H1 (cell line): ENCODE measurements at regions of chr19 and their contacts with region 1.

Region 1: GRCh38 chr19:2475702-2476450 is at the start of gene GADD45B:
- DNase-seq: peak; percentile 90 to 97
- H3K4me3 ChIP-seq: peak within 1 kb of the TSS; percentile 56 to 81 (median 76)
- H3K27ac ChIP-seq: no peak within 1 kb of the TSS
- H3K4me1 ChIP-seq: peaks cover 0 to 14% (median 13%) of the 10 kb centered on the region in 4 experiments; a peak in 6 of 7 replicates
- H3K27me3 ChIP-seq: peaks cover 10 to 40% (median 34%) of the 10 kb centered on the region in 4 experiments
- CTCF ChIP-seq: no peak
- EP300 ChIP-seq: no peak
- POLR2A ChIP-seq: peak; percentile 100
- RAD21 ChIP-seq: no peak
- total RNA-seq, gene GADD45B: 11.0 and 11.4 TPM in 2 replicates

Region 2: DNA sequence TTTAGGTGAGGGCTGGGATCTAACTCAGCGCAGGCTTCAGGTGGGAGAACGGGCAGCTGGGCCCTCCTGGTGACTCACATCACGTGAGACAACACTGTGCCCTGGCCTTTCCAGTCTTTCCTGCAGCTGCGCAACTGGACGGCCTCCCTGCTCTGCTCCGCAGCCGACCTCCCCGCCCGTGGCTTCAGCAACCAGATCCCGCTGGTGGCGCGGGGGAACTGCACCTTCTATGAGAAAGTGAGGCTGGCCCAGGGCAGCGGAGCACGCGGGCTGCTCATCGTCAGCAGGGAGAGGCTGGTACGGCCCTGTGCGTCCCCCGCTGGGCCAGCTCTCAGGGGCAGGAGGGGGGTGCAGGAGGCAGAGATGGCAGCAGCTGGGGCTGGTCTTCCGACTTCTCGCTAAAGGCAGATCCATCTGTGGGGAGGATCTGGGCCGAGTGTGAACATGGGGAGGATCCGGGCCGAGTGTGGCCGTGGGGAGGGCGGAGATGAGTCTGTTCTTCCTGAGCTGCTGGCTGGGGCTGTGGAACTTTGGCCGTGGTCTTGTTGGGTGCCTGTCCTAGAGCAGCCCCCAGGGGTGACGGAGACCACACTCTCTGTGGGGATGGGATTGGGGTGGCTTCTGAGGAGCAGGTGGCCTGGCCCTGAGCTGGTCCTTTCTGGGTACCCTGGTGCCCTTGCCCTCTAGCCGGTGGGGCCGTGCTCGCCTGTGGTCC is 138.4 kb before region 1 on chr19:
- CTCF ChIA-PET with region 1: no interaction called
- POLR2A ChIA-PET with region 1: no interaction called
- DNase-seq: peak in 1 of 2 experiments; percentile 77
- H3K4me3 ChIP-seq: no peak overlapping the region
- H3K27ac ChIP-seq: no peak overlapping the region
- H3K4me1 ChIP-seq: peaks cover 0 to 8% (median 2%) of the 10 kb centered on the region in 4 experiments; a peak in 4 of 7 replicates
- H3K27me3 ChIP-seq: no peaks in the 10 kb centered on the region
- CTCF ChIP-seq: peak in 2 of 3 experiments; percentile 43 to 46; a peak in 3 of 4 replicates
- EP300 ChIP-seq: no peak
- POLR2A ChIP-seq: no peak
- RAD21 ChIP-seq: peak; percentile 8 to 23; a peak in 2 of 4 replicates

Region 3: DNA sequence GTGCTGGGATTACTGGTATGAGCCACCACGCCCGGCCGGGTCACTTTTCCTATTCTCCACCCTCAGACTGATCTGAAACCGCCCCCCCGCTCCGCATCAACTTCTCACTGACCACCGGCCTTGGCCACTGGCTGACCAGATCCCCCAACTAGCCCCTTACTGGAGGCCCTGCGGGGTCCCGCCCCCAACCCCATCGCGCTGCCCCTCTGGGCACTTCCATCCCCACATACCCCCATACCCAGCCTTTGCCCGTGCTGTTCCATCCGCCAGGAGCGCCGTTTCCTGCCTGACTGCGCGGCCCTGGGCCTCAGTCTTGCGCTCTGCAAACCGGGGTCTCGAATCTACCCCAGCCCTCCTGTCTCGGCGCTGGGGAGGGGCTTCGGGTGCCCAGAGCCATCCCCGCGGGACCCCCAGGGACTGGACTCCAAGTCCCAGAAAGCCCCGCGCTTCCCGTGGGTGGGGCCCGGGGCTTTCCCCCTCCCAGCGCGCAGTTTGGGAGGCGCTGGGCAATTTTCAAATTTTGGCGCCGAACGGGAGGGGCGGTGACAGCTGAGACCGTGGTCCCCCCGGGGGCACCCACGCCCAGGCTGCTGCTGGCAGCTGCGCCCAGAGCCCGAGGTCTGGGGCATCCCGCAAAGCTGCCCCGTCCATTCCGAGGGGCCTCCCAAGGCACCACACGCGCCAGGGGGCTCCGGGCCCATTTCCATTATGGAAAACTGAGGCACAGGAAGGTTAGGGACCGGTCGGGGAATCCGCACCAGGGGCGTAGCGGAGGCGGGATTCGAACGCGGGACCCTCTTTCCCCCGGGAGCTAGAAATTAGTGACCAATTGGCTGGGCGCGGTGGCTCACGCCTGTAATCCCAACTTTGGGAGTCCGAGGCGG is 13.9 kb before region 1 on chr19:
- CTCF ChIA-PET with region 1: interaction called, 8 read pairs
- POLR2A ChIA-PET with region 1: interaction called, 98 read pairs
- DNase-seq: peak in 1 of 2 experiments; percentile 82
- H3K4me3 ChIP-seq: peak overlapping the region; percentile 37 to 65 (median 60)
- H3K27ac ChIP-seq: no peak overlapping the region
- H3K4me1 ChIP-seq: peaks cover 0 to 4% (median 0%) of the 10 kb centered on the region in 4 experiments; a peak in 2 of 7 replicates
- H3K27me3 ChIP-seq: no peaks in the 10 kb centered on the region
- CTCF ChIP-seq: peak in 1 of 3 experiments; percentile 10; a peak in 1 of 4 replicates
- EP300 ChIP-seq: no peak
- POLR2A ChIP-seq: no peak
- RAD21 ChIP-seq: no peak

Region 4: GRCh38 chr19:2517868-2518625 is 42.2 kb after region 1 on chr19:
- CTCF ChIA-PET with region 1: interaction called, 4 read pairs
- POLR2A ChIA-PET with region 1: interaction called, 37 read pairs
- DNase-seq: no peak
- H3K4me3 ChIP-seq: no peak overlapping the region
- H3K27ac ChIP-seq: no peak overlapping the region
- H3K4me1 ChIP-seq: peaks cover 0 to 4% (median 2%) of the 10 kb centered on the region in 4 experiments; a peak in 4 of 7 replicates
- H3K27me3 ChIP-seq: no peaks in the 10 kb centered on the region
- CTCF ChIP-seq: no peak
- EP300 ChIP-seq: no peak
- POLR2A ChIP-seq: no peak
- RAD21 ChIP-seq: no peak

Region 5: GRCh38 chr19:2552859-2553258 is 77.0 kb after region 1 on chr19:
- CTCF ChIA-PET with region 1: interaction called, 5 read pairs
- POLR2A ChIA-PET with region 1: interaction called, 31 read pairs
- DNase-seq: no peak
- H3K4me3 ChIP-seq: no peak overlapping the region
- H3K27ac ChIP-seq: no peak overlapping the region
- H3K4me1 ChIP-seq: peaks cover 0 to 10% (median 0%) of the 10 kb centered on the region in 4 experiments; a peak in 1 of 7 replicates
- H3K27me3 ChIP-seq: no peaks in the 10 kb centered on the region
- CTCF ChIP-seq: no peak
- EP300 ChIP-seq: no peak
- POLR2A ChIP-seq: no peak
- RAD21 ChIP-seq: no peak

Region 6: DNA sequence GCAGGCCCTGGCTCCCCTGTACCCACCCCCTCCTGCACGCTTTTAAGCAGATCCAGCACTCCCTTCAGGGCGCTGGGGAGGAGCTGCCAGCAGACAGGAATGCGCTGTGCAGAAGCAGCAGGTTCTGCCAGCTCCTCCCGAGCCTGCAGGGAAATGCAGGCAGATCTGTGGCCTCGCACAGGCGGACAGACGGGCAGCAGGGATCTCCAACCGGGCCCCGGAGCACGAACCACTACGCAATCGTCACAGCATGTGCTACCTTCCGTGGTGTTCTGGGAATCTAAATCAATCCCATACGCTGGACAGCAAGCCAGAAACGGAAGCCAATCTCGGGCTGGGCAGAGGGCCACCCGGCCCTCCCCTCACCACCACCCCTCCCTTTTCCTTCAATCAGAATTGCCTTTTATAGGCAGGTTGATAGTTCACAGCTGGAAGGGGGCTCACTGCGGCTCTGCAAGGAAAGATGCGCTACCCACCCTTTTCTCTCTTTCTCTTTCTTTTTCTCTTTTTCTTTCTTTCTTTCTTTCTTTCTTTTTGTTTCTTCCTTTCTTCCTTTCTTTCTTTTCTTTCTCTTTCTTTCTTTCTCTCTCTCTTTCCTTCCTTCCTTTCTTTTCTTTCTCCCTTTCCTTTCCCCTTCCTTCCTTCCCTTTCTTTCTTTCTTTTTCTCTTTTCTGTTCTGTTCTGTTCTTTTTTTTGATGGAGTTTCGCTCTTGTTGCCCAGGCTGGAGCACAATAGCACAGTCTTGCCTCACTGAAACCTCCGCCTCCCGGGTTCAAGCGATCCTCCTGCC is 126.7 kb after region 1 on chr19:
- CTCF ChIA-PET with region 1: interaction called, 96 read pairs
- POLR2A ChIA-PET with region 1: interaction called, 135 read pairs
- DNase-seq: peak in 1 of 2 experiments; percentile 80
- H3K4me3 ChIP-seq: peak overlapping the region in 3 of 4 experiments; percentile 10 to 45 (median 27); a peak in 4 of 8 replicates
- H3K27ac ChIP-seq: no peak overlapping the region
- H3K4me1 ChIP-seq: peaks cover 0 to 8% (median 2%) of the 10 kb centered on the region in 4 experiments; a peak in 4 of 7 replicates
- H3K27me3 ChIP-seq: peaks cover 0 to 4% (median 0%) of the 10 kb centered on the region in 4 experiments; a peak in 2 of 7 replicates
- CTCF ChIP-seq: no peak
- EP300 ChIP-seq: no peak
- POLR2A ChIP-seq: peak in 1 of 2 experiments; percentile 52; a peak in 1 of 3 replicates
- RAD21 ChIP-seq: no peak; a peak in 1 of 4 replicates

Region 7: DNA sequence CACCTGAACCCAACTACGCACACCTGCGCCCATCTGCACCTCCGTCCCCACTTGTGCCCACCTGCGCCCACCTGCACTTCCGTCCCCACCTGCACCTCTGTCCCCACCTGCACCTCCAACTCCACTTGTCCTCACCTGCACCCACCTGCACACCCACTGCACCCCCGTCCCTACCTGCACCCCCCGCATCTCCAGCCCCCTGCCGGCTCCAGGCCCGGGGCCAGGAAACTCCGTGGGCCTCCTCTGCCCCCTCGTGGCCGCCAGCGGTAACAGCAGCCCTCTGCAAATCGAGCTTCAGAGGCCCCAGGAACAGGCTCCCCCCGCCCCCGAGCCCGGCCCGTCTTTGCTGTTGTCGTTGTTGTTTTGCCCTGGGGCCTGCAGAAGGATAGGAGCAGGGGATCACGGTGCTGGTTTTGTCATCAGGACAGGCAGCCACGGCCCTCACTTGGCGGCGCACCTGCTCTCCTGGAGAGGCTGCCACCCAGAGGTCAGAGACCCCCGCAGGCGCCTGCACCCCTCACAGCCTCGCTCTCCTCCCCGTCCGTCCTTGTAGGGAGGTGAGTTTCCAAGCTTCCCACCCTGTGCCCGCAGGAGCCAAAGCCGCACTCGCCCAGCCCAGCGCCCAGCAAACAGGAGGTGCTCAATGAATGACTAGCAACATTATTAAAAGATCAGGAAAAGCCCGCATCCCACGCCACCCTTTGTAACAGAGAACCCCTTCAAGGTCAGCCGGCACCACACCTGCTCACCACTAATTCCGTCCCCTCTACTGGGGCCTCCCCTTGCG is 161.2 kb after region 1 on chr19:
- CTCF ChIA-PET with region 1: interaction called, 34 read pairs
- POLR2A ChIA-PET with region 1: interaction called, 20 read pairs
- DNase-seq: peak in 1 of 2 experiments; percentile 89
- H3K4me3 ChIP-seq: peak overlapping the region in 3 of 4 experiments; percentile 36 to 54 (median 38); a peak in 6 of 8 replicates
- H3K27ac ChIP-seq: no peak overlapping the region
- H3K4me1 ChIP-seq: peaks cover 0 to 4% (median 2%) of the 10 kb centered on the region in 4 experiments; a peak in 3 of 7 replicates
- H3K27me3 ChIP-seq: no peaks in the 10 kb centered on the region; a peak in 1 of 7 replicates
- CTCF ChIP-seq: peak; percentile 78 to 84 (median 82)
- EP300 ChIP-seq: no peak
- POLR2A ChIP-seq: no peak
- RAD21 ChIP-seq: peak; percentile 83 to 85